ENCODE measurements at regions of chr3 and their contacts with region 1.

Region 1: GRCh38 chr3:33636125-33636850 is 81.8 kb downstream of the CLASP2 start:
- DNase-seq: no peak
- H3K4me3 ChIP-seq: no peak overlapping the region
- CTCF ChIP-seq: peak in 1 of 3 donors; percentile 16
- POLR2A ChIP-seq: no peak

Region 2: GRCh38 chr3:33787328-33788009 is 151.2 kb after region 1 on chr3:
- intact Hi-C with region 1: loop called (anchors 10 kb)
- DNase-seq: peak; percentile 47 to 87
- H3K4me3 ChIP-seq: no peak overlapping the region
- CTCF ChIP-seq: peak in 1 of 3 donors; percentile 50
- POLR2A ChIP-seq: no peak